Naive thymus-derived CD4-positive, alpha-beta T cell (primary cell): ENCODE measurements at regions of chr4 and their contacts with region 1.

Region 1: GRCh38 chr4:74376888-74377483 is 12.0 kb downstream of the EREG start:
- DNase-seq: peak in 7 of 9 donors; percentile 25 to 60 (median 48)
- ATAC-seq: peak; percentile 73
- H3K4me3 ChIP-seq: no peak overlapping the region
- H3K4me3 Mint-ChIP-seq: no peak overlapping the region
- H3K27ac ChIP-seq: no peak overlapping the region
- H3K27ac Mint-ChIP-seq: no peak overlapping the region
- H3K4me1 ChIP-seq: no peaks in the 10 kb centered on the region
- H3K4me1 Mint-ChIP-seq: no peaks in the 10 kb centered on the region
- H3K27me3 ChIP-seq: no peaks in the 10 kb centered on the region
- H3K27me3 Mint-ChIP-seq: peaks cover 0 to 16% (median 8%) of the 10 kb centered on the region in 5 donors

Region 2: DNA sequence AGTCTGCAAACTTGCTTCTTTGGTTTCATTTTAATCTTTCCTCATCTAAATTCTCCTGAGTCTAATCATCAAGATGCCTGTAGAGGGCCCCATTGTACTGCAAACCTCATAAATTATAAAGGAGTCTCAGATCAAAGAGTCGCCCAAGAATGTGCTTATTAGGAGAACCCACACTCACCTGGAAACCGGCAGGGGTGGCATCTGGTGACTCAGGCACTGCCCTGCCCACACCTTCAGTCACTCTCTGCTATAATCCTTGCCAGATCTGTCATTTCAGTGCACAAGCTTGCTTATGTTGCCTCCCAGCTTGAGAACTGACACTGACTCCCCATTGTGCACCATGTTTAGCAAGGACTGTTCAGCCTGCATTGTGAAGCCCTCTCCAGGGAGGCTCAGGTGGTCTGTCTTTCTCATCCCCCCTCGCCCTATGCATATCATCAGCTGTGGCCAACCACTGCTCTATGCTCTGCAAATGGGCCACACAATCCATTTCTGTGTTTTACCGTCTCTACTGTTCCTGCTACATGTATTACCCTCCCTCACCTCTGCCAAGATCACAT is 56.3 kb before region 1 on chr4:
- CTCF ChIA-PET with region 1: no interaction called
- POLR2A ChIA-PET with region 1: no interaction called
- intact Hi-C with region 1: loop called in 1 of 2 experiments (anchors 2 kb)
- DNase-seq: peak in 6 of 9 donors; percentile 17 to 35 (median 24)
- ATAC-seq: peak; percentile 82
- H3K4me3 ChIP-seq: no peak overlapping the region
- H3K4me3 Mint-ChIP-seq: no peak overlapping the region
- H3K27ac ChIP-seq: no peak overlapping the region
- H3K27ac Mint-ChIP-seq: no peak overlapping the region
- H3K4me1 ChIP-seq: no peaks in the 10 kb centered on the region
- H3K4me1 Mint-ChIP-seq: peaks cover 0 to 6% (median 0%) of the 10 kb centered on the region in 7 donors
- H3K27me3 ChIP-seq: no peaks in the 10 kb centered on the region
- H3K27me3 Mint-ChIP-seq: peaks cover 4 to 23% (median 19%) of the 10 kb centered on the region in 5 donors

Region 3: GRCh38 chr4:74397748-74398426 is 20.9 kb after region 1 on chr4:
- CTCF ChIA-PET with region 1: interaction called, 5 read pairs
- POLR2A ChIA-PET with region 1: interaction called, 4 read pairs
- intact Hi-C with region 1: loop called in 1 of 2 experiments (anchors 1 kb)
- DNase-seq: peak in 4 of 9 donors; percentile 10 to 58 (median 38)
- ATAC-seq: peak; percentile 78
- H3K4me3 ChIP-seq: peak overlapping the region; percentile 76
- H3K4me3 Mint-ChIP-seq: peak overlapping the region; percentile 89 to 99 (median 96)
- H3K27ac ChIP-seq: peak overlapping the region; percentile 83
- H3K27ac Mint-ChIP-seq: peak overlapping the region; percentile 92 to 99 (median 97)
- H3K4me1 ChIP-seq: no peaks in the 10 kb centered on the region
- H3K4me1 Mint-ChIP-seq: peaks cover 0 to 19% (median 11%) of the 10 kb centered on the region in 7 donors
- H3K27me3 ChIP-seq: no peaks in the 10 kb centered on the region
- H3K27me3 Mint-ChIP-seq: peaks cover 0 to 5% (median 0%) of the 10 kb centered on the region in 5 donors